Endothelial cell of umbilical vein (primary cell): ENCODE measurements at regions of chr7 and their contacts with region 1.

Region 1: DNA sequence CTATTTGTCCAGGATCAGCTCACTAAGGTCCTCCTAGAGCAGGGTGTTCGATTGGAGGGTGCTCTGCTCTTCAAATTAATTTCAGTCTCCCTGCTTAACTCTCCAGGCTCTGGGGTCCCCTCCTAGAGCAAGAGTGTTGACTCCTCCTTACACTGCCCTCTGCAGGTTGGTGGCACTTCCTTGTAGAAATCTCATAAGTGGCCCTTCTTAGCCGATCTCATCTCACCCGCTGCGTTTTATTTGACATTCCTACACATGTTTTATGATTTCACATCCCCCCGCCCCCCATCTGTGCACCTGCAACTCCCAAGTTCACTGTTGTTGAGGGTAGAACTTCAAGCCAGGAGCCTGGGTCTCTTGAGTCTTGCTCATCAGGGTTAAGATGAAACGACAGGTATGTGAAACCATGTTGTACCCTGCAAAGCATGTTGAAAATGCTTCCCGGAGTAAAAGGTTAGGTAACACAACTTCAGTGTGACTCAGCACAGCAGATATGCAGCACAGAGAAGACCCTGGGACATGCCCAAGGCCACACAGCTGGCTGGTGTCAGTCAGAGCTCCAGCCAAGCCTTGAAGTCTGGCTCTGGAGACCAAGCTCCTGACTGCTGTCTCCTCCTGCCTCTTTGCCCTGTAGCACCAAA is 171.2 kb downstream of the PRKAG2 start:
- DNase-seq: peak; percentile 60
- H3K4me3 ChIP-seq: no peak overlapping the region
- H3K27ac ChIP-seq: no peak overlapping the region
- H3K4me1 ChIP-seq: no peaks in the 10 kb centered on the region
- H3K27me3 ChIP-seq: no peaks in the 10 kb centered on the region
- CTCF ChIP-seq: peak; percentile 48 to 61
- POLR2A ChIP-seq: no peak

Region 2: GRCh38 chr7:151570366-151570915 is 135.3 kb before region 1 on chr7:
- CTCF ChIA-PET with region 1: interaction called, 3 read pairs
- POLR2A ChIA-PET with region 1: no interaction called
- dilution Hi-C with region 1: no loop called
- intact Hi-C with region 1: loop called (anchors 1 kb)
- DNase-seq: peak; percentile 61
- H3K4me3 ChIP-seq: no peak overlapping the region
- H3K27ac ChIP-seq: no peak overlapping the region
- H3K4me1 ChIP-seq: no peaks in the 10 kb centered on the region
- H3K27me3 ChIP-seq: no peaks in the 10 kb centered on the region
- CTCF ChIP-seq: peak; percentile 37
- POLR2A ChIP-seq: no peak